H1 (cell line): ENCODE measurements at regions of chr10 and their contacts with region 1.

Region 1: GRCh38 chr10:118568327-118568848 is 27.1 kb downstream of the PRLHR start:
- DNase-seq: peak in 1 of 2 experiments; percentile 54
- H3K4me3 ChIP-seq: no peak overlapping the region
- H3K27ac ChIP-seq: no peak overlapping the region
- H3K4me1 ChIP-seq: peaks cover 0 to 7% (median 2%) of the 10 kb centered on the region in 4 experiments; a peak in 3 of 7 replicates
- H3K27me3 ChIP-seq: no peaks in the 10 kb centered on the region; a peak in 1 of 7 replicates
- CTCF ChIP-seq: peak; percentile 25 to 70 (median 50)
- EP300 ChIP-seq: no peak
- POLR2A ChIP-seq: no peak
- RAD21 ChIP-seq: peak; percentile 79 to 80

Region 2: DNA sequence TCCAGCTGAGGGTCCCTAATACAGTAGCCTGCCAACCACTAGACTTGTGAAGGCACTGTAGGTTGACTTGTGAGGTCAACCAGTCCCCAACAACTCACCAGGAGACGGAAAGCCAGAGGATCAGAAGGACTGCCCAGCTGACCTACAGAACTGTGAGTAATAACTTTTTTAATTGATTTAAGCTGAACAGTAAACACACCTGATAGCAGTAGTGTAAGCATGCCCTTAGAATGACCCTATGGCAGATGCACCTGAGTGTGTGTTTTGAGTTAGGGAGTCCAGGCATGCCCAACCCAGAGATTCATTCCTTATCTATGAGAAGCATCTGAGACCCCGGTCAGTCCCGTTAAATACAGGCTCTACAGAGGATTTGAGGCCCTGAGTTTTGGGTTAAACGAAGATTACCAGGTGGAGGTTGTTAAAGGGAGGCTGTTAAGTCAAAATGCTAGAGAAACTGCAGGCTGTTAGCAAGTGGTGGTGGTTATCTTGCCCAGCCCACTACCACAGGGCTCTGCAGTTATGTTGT is 13.0 kb after region 1 on chr10:
- CTCF ChIA-PET with region 1: interaction called, 35 read pairs
- POLR2A ChIA-PET with region 1: no interaction called
- DNase-seq: no peak
- H3K4me3 ChIP-seq: no peak overlapping the region
- H3K27ac ChIP-seq: no peak overlapping the region
- H3K4me1 ChIP-seq: no peaks in the 10 kb centered on the region
- H3K27me3 ChIP-seq: peaks cover 0 to 3% (median 0%) of the 10 kb centered on the region in 4 experiments; a peak in 1 of 7 replicates
- CTCF ChIP-seq: no peak
- EP300 ChIP-seq: no peak
- POLR2A ChIP-seq: no peak
- RAD21 ChIP-seq: no peak

Region 3: DNA sequence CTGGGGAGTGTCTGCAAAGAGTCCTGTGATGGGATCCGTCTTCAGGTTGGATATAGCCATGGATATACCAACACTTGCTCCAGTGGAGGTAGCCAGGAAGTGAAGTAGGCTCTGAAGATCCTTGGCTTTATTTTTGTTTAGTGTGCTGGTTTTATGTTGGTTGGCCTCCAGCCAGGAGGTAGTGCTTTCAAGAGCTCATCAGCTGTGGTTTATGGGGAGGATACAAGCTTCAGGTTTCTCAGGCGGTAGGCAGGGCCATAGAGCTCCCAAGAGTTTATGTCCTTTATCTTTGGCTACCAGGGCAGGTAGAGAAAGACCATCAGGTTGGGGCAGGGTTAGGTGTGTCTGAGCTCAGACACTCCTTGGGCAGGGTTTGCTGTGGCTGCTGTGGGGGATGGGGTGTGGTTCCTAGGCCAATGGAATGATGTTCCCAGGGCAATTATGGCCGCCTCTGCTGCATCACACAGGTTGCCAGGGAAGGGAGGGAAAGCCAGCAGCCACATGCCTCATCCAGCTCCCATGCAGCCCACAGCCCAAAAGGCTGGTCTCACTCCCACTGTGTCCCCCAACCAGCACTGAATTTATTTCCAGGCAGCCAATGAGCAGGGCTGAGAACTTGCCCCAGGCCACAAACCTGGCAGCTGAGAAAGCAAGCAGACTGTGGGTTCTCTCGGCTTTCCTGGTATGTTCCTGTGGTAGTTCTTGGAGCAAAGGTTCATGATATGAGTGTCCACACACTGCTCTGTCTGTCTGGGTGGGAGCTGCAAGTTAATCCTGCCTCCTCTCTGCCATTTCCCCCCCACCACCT is 94.0 kb after region 1 on chr10:
- CTCF ChIA-PET with region 1: interaction called, 10 read pairs
- POLR2A ChIA-PET with region 1: no interaction called
- DNase-seq: no peak
- H3K4me3 ChIP-seq: no peak overlapping the region
- H3K27ac ChIP-seq: no peak overlapping the region
- H3K4me1 ChIP-seq: no peaks in the 10 kb centered on the region; a peak in 1 of 7 replicates
- H3K27me3 ChIP-seq: no peaks in the 10 kb centered on the region
- CTCF ChIP-seq: no peak
- EP300 ChIP-seq: no peak
- POLR2A ChIP-seq: no peak
- RAD21 ChIP-seq: no peak

Region 4: GRCh38 chr10:118712930-118713634 is 144.7 kb after region 1 on chr10:
- CTCF ChIA-PET with region 1: interaction called, 65 read pairs
- POLR2A ChIA-PET with region 1: interaction called, 3 read pairs
- DNase-seq: peak in 1 of 2 experiments; percentile 69
- H3K4me3 ChIP-seq: no peak overlapping the region
- H3K27ac ChIP-seq: no peak overlapping the region; the same call in 1 of the 2 replicates
- H3K4me1 ChIP-seq: peaks cover 0 to 2% (median 0%) of the 10 kb centered on the region in 4 experiments; a peak in 1 of 7 replicates
- H3K27me3 ChIP-seq: no peaks in the 10 kb centered on the region
- CTCF ChIP-seq: peak; percentile 62 to 87 (median 70)
- EP300 ChIP-seq: no peak
- POLR2A ChIP-seq: no peak
- RAD21 ChIP-seq: peak; percentile 64 to 73

Region 5: DNA sequence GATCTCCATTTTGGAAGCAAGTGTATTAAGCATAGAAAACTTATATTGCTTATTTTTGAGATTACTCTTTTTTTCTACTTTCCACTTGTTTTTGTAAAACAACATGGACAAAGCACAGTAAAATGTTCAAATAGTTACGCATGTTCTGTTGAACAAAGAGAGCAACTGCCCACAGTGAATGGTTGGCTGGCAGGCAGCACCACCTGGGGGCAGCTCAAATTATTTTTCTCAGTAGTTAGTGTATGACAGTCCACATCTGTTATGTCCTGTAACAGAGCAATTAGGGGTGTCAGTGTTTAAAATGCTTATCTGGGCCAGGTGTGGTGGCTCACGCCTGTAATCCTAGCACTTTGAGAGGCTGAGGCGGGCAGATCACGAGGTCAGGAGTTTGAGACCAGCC is 232.5 kb after region 1 on chr10:
- CTCF ChIA-PET with region 1: interaction called, 29 read pairs
- POLR2A ChIA-PET with region 1: no interaction called
- DNase-seq: no peak
- H3K4me3 ChIP-seq: no peak overlapping the region
- H3K27ac ChIP-seq: no peak overlapping the region
- H3K4me1 ChIP-seq: no peaks in the 10 kb centered on the region
- H3K27me3 ChIP-seq: no peaks in the 10 kb centered on the region
- CTCF ChIP-seq: peak; percentile 20 to 34 (median 22); a peak in 3 of 4 replicates
- EP300 ChIP-seq: no peak
- POLR2A ChIP-seq: no peak
- RAD21 ChIP-seq: peak; percentile 50 to 63